SK-N-SH (cell line): ENCODE measurements at regions of chr9 and their contacts with region 1.

Region 1: GRCh38 chr9:112112941-112113681 is 62.0 kb downstream of the SUSD1 start:
- DNase-seq: peak; percentile 24
- H3K4me3 ChIP-seq: no peak overlapping the region
- H3K27ac ChIP-seq: peak overlapping the region in 1 of 2 experiments; percentile 88; a peak in 2 of 4 replicates
- H3K4me1 ChIP-seq: peaks cover 0 to 21% of the 10 kb centered on the region in 2 experiments; a peak in 1 of 4 replicates
- H3K27me3 ChIP-seq: no peaks in the 10 kb centered on the region
- CTCF ChIP-seq: peak; percentile 50
- EP300 ChIP-seq: no peak
- RAD21 ChIP-seq: peak; percentile 71

Region 2: DNA sequence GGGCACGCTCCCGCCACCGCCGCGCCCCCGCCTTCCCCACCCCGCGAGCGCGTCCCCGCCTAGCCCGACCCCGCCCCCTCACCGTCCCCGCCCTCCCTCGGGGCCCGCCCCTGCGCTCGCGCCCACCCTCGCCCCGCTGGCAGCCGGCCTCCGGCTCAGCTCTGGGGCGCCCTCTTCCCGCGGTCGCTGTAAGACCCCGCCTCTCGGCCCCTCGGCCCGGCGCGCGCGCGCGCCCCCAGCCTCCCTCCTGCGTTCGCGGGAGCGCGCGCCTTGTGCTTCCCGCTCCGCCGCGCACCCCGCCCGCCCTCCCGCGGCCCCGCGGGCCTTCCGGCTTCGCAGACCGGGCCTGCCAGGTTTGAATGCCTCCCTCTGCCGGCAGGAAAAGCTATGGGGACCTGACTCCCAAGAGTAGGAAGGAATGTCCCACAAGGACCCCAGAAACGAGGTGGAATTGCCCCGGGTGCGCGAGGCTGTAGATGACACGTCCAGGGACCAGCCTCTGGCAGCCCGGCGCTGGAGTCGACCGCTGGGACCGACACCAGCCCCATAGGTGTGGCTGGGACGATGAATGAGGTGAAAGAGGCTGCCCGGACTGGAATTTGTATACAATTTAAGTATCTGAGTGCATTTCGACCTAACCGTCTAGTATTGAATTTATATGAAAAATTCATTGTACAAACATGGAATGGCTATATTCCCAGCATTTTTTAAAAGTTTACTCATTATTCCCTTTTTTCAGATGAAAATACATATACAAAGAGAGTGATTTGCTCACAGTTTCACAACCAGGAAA is 220.7 kb after region 1 on chr9:
- CTCF ChIA-PET with region 1: interaction called, 11 read pairs
- POLR2A ChIA-PET with region 1: no interaction called
- DNase-seq: peak; percentile 99
- H3K4me3 ChIP-seq: peak overlapping the region; percentile 93 to 99
- H3K27ac ChIP-seq: peak overlapping the region; percentile 95 to 96
- H3K4me1 ChIP-seq: peaks cover 3 to 11% of the 10 kb centered on the region in 2 experiments; a peak in 2 of 4 replicates
- H3K27me3 ChIP-seq: no peaks in the 10 kb centered on the region
- CTCF ChIP-seq: peak; percentile 57
- EP300 ChIP-seq: no peak
- RAD21 ChIP-seq: peak; percentile 50